Activated CD8-positive, alpha-beta T cell treated with anti-CD3 and anti-CD28 coated beads, Interleukin-2, amount 10 ng/mL, durations not matched to agents 7 days and 5 days (primary cell): ENCODE measurements at regions of chr2 and their contacts with region 1.

Region 1: GRCh38 chr2:110874453-110875383 is 142.3 kb downstream of the ACOXL start:
- DNase-seq: no peak
- ATAC-seq: no peak
- H3K4me3 Mint-ChIP-seq: no peak overlapping the region
- H3K27ac Mint-ChIP-seq: no peak overlapping the region
- H3K4me1 Mint-ChIP-seq: peaks cover 62% of the 10 kb centered on the region
- H3K27me3 Mint-ChIP-seq: peaks cover 2% of the 10 kb centered on the region

Region 2: DNA sequence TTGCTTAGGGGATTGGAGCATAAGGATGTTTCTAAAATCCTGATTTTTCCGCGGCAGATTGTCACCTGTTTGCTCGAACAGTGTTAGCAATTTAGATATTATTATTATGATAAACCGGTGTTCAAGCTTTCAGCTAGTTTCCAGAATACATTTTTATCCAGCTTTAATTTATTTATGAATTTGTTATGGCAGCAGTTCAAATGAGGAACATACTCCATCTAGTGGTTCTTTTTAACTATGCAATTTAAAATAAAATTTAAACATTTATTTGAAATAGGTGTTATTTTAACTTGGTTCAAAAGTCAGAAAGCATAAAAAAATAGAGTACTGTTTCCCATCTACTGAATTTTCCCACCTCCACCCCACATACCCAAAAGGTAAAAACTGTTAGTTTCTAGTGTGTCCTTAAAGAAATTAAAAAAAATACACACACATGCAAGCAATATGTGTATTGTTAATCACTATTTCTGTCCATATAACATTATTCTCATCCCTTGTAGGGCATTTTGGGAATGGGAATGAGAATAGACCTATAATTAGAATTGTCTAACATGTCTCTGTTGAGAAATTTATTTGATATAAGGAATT is 119.1 kb before region 1 on chr2:
- CTCF ChIA-PET with region 1: no interaction called
- POLR2A ChIA-PET with region 1: no interaction called
- DNase-seq: no peak
- ATAC-seq: no peak
- H3K4me3 Mint-ChIP-seq: no peak overlapping the region
- H3K27ac Mint-ChIP-seq: no peak overlapping the region
- H3K4me1 Mint-ChIP-seq: no peaks in the 10 kb centered on the region
- H3K27me3 Mint-ChIP-seq: peaks cover 37% of the 10 kb centered on the region

Region 3: GRCh38 chr2:110858993-110859701 is 15.6 kb before region 1 on chr2:
- CTCF ChIA-PET with region 1: interaction called, 21 read pairs
- POLR2A ChIA-PET with region 1: interaction called, 3 read pairs
- DNase-seq: no peak
- ATAC-seq: no peak
- H3K4me3 Mint-ChIP-seq: peak overlapping the region; percentile 46
- H3K27ac Mint-ChIP-seq: peak overlapping the region; percentile 69
- H3K4me1 Mint-ChIP-seq: peaks cover 61% of the 10 kb centered on the region
- H3K27me3 Mint-ChIP-seq: no peaks in the 10 kb centered on the region

Region 4: GRCh38 chr2:110886826-110887573 is 12.3 kb after region 1 on chr2:
- CTCF ChIA-PET with region 1: no interaction called
- POLR2A ChIA-PET with region 1: no interaction called
- DNase-seq: no peak
- ATAC-seq: no peak
- H3K4me3 Mint-ChIP-seq: no peak overlapping the region
- H3K27ac Mint-ChIP-seq: no peak overlapping the region
- H3K4me1 Mint-ChIP-seq: peaks cover 3% of the 10 kb centered on the region
- H3K27me3 Mint-ChIP-seq: peaks cover 25% of the 10 kb centered on the region